ENCODE measurements at regions of chr1 and their contacts with region 1.

Region 1: DNA sequence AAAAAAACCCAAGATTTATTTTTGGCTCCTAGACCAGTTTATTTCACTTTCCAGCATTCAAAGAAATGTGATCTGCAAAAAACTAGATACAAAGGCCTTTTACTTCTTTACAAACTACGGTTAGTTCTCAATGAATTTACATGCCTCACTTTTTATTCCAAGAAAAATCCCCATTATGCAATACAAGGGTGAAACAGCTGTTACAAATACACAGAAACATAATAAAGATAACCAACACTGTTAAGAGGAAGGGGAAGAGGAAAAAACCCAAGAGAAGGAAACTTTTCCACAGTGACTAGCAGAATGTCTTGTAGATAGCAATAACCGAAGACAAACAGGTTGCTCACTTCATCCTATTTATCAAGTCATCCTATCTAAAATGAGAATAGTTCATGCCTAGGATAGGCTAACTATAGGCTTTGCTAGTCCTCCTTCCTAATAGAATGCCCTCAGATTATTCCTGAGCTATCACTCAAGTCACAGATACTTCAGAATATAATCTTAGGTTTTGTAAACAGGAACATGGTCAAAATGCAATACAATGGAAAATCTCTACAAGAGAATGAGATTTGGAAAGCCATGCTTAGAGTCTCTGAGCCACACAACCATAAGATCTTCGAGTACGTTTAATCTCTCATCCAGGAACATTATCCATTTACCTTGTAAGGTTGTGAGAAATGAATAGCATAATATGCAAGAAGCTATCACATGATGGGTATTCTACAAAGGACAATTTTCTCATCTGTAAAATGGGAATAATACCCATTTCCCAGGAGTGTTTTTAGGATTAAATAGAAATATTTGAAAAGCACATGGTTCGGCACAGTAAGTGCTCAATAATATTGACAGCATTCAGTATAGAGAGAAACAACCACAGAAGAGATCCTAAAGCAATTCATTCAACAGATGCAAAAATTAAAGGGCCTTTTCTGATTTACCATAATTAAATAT is 5.4 kb downstream of the PNRC2 start:
- DNase-seq: no peak
- H3K4me3 ChIP-seq: no peak overlapping the region
- H3K27ac ChIP-seq: peak overlapping the region in 4 of 5 donors; percentile 29 to 76 (median 54)
- H3K4me1 ChIP-seq: peaks cover 4 to 33% of the 10 kb centered on the region in 2 donors
- H3K27me3 ChIP-seq: no peaks in the 10 kb centered on the region
- CTCF ChIP-seq: no peak
- POLR2A ChIP-seq: no peak

Region 2: DNA sequence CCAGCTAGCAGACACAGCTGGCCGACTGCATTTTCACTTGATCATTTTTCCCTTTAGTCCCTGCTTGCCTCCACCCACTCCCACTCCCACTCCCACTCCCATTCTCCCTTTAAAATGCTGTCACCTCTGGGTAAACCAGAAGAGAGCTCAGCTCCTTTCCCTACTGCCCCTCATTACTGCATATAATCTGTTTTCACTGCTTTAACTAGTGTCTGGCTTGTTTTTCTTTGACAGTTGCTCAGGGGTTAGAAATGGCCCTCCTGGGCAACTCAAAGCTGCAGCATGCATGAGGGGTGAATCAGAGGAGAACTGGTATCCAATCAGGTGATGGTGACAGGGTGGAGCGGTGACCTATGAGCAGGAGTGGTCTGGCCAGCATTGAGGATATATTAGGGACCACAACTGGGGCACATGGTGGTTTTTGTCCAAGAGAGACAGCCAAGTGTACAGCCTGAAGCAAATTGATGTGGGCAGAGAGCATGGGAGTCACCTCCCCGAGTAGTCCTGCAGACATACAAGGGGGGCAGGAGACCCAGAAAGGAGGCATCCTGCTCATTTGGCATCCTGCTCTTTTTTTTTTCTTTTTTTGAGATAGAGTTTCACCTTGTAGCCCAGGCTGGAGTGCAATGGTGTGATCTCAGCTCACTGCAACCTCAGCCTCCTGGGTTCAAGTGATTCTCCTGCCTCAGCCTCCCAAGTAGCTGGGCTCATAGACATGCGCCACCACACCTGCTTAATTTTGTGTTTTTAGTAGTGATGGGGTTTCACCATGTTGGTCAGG is 57.7 kb after region 1 on chr1:
- intact Hi-C with region 1: loop called in 1 of 2 experiments (anchors 5 kb)
- DNase-seq: peak in 4 of 7 donors; percentile 35 to 56 (median 38)
- H3K4me3 ChIP-seq: no peak overlapping the region
- H3K27ac ChIP-seq: peak overlapping the region in 2 of 5 donors; percentile 4 to 13
- H3K4me1 ChIP-seq: peaks cover 18 to 38% of the 10 kb centered on the region in 2 donors
- H3K27me3 ChIP-seq: no peaks in the 10 kb centered on the region
- CTCF ChIP-seq: no peak
- POLR2A ChIP-seq: no peak

Measured in adrenal gland (tissue), 19 donors.